HEK293 (cell line): ENCODE measurements at regions of chr17 and their contacts with region 1.

Region 1: GRCh38 chr17:81328978-81329919 is 34.1 kb upstream of the SLC38A10 start:
- H3K4me3 ChIP-seq: no peak overlapping the region
- H3K27ac ChIP-seq: peak overlapping the region; percentile 91
- H3K4me1 ChIP-seq: peaks cover 16% of the 10 kb centered on the region
- CTCF ChIP-seq: no peak

Region 2: DNA sequence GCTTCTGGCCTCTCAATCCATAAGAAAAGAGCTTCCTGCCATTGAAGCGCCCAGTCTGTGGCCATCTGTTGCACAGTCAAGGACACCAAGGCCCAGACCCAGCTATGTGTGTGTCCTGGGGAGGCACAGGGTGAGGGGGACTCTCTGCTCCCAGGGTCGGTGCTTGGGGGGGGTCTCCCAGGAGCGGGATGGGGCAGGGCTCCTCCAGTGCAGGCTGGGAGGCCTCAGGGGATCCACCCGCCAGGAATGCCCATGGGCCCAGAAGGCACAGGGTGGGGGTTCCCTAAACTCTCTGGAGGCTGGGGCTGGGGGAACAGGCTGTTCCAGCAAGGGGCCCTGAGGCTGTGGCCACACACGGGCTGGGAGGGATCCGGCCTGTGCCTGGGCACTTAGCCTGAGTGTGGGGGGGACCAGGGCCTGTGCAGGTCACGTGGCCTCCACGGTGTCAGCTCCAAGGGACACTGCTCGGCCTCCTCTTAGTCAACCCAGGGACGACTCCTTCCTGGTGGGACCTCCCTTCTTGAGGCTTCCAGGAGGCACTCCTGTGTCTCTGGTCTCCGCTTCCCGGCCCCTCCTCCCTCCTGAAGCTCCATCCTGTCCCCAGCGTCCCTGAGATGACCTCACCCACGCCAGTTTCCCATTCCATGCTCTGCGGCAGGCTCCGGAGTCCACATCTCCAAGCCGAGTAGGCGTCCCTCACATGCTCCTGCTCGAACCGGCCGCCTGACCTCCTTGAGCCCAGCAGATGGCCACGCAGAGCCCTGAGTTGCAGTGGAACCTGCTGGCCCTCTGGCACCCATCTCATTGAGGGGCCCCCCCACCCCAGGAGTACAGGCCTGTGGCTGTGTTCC is 42.9 kb after region 1 on chr17:
- CTCF ChIA-PET with region 1: no interaction called
- POLR2A ChIA-PET with region 1: no interaction called
- H3K4me3 ChIP-seq: no peak overlapping the region
- H3K27ac ChIP-seq: no peak overlapping the region
- H3K4me1 ChIP-seq: no peaks in the 10 kb centered on the region
- CTCF ChIP-seq: peak; percentile 64; the same call in 1 of the 2 replicates

Region 3: GRCh38 chr17:81383504-81384421 is 54.5 kb after region 1 on chr17:
- CTCF ChIA-PET with region 1: no interaction called
- POLR2A ChIA-PET with region 1: no interaction called
- H3K4me3 ChIP-seq: no peak overlapping the region
- H3K27ac ChIP-seq: no peak overlapping the region
- H3K4me1 ChIP-seq: peaks cover 9% of the 10 kb centered on the region
- CTCF ChIP-seq: no peak

Region 4: DNA sequence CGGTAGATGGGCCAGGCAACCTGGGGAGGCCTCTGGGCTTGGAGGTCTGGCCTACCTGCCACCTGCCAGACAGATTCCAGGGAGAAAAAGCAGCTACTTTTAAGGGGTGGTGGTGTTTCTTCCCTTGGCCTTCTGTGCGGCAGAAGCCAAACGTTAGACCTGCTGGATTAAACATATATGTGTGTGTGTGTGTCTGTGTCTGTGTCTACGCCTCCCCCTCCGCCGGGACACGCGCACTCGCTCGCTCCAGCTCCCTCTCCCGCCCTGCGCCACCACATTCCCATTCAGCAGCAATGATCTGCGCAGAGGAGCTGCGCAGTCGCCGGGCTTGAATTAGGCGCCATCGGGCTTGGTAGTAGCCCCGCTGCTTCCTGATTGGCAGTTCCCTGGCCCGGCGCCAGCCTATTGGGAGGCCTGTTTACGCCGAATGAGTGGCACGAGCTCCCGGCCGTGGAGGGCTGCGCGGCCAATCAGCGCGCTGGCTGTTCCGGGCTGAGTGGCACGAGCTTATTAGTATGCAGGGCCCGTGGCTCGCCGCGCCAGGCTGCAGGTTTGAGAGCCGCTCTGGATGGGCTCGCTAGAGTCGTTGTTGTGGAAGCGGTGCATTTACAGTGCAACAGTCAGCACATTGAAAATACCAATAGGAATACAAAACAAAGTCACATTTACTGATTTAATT is 65.8 kb after region 1 on chr17 and contains the start of gene BAHCC1:
- CTCF ChIA-PET with region 1: interaction called, 4 read pairs
- POLR2A ChIA-PET with region 1: interaction called, 52 read pairs
- H3K4me3 ChIP-seq: peak within 1 kb of the TSS; percentile 92
- H3K27ac ChIP-seq: peak within 1 kb of the TSS; percentile 100
- H3K4me1 ChIP-seq: peaks cover 23% of the 10 kb centered on the region
- CTCF ChIP-seq: peak; percentile 32; the same call in 1 of the 2 replicates